ENCODE measurements at regions of chr13 and their contacts with region 1.

Region 1: DNA sequence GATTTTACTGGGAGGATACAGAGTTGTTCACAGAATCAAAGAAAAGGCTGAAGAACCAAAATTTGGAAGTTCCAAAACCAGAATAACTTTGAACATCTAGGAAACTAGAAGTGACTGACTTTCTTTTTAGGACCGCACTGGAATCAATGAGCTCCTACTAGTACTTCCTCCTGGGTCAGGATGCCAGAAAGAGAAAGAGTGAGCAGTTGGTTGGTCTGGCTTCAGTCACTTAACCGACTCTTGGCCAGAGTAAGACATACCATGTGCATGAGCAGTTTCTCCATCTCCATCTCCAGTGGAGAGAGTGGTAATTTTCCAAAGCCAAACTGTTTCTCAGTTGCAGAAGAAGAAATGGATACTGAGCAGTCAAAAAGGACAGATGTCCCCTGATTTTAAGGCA is 27.1 kb upstream of the MTUS2 start:
- DNase-seq: no peak
- ATAC-seq: peak; percentile 33 to 64
- H3K4me3 ChIP-seq: no peak overlapping the region
- H3K27ac ChIP-seq: no peak overlapping the region
- H3K4me1 ChIP-seq: no peaks in the 10 kb centered on the region
- H3K27me3 ChIP-seq: no peaks in the 10 kb centered on the region

Region 2: DNA sequence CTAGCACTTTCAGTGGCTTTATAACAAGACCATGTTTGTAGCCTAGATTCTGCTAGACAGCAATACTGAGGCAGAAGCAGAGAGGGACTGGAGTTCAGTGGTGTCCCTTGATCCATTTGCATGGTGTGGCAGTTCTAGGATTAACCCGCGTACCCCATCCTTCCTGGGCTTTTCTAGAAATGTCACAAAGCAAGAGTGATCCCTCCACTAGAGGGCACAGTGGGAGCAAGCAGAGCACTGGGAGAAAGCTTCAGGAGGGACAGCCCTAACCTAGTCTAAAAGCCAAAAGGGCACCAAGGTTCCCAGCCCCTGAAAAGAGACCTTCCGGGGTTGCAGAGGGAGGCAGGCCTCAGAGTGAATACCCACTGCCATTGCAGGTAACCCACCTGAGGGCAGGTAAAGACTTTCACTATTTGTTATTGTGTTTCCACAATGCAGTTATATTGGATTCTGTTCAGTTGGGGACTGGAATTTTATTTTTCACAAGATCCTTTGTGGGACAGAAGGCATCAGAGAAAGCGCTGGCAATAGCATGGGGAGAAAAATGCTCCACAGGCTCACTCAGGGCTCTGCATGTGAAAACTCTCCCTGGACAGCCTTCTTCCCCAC is 468.7 kb before region 1 on chr13:
- intact Hi-C with region 1: loop called in 2 of 4 experiments (anchors 10 kb)
- DNase-seq: peak in 2 of 3 donors; percentile 47 to 69
- ATAC-seq: peak; percentile 77 to 85
- H3K4me3 ChIP-seq: no peak overlapping the region
- H3K27ac ChIP-seq: peak overlapping the region; percentile 26
- H3K4me1 ChIP-seq: no peaks in the 10 kb centered on the region
- H3K27me3 ChIP-seq: no peaks in the 10 kb centered on the region

Region 3: DNA sequence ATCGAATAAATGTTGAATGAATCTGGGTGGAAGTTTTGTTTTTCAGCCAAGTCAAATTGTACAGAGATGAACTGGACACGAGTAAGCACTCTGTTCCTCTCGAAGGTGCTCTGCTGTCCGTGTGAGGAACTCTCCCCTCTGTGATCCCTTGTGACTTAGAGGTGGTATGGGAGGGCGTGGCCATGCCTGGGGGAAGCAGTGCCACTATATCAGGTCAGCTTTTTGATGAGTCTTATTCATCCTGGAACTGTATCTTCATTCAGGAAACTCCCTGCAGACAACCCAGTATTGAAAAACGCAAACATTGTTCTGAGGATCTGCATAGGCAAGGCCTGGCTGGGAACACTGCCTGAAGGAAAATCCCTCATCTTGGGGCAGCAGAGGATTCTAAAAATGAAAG is 252.4 kb before region 1 on chr13:
- intact Hi-C with region 1: no loop called
- DNase-seq: no peak
- ATAC-seq: peak in 1 of 2 donors; percentile 59
- H3K4me3 ChIP-seq: no peak overlapping the region
- H3K27ac ChIP-seq: no peak overlapping the region
- H3K4me1 ChIP-seq: no peaks in the 10 kb centered on the region
- H3K27me3 ChIP-seq: no peaks in the 10 kb centered on the region

Region 4: DNA sequence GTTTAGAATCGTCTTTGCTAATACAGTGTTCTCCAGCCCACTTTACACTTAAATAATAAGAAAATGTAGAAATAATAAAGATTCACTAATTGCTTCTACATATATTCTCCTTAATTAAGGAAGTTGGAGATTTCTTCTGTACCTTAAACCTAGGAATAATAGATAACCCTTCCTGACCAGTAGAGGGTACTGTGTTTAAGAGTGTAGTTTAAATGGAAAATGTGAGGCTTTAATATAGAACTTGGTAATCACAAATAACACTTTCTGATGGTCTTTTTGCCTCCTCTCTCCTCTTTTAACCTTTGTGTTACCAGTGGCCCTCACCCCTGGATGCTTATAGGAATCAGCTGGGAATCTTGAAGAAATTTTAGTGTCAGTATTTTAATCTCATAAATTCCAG is 113.4 kb before region 1 on chr13:
- intact Hi-C with region 1: loop called in 2 of 4 experiments (anchors 5 kb)
- DNase-seq: no peak
- ATAC-seq: no peak
- H3K4me3 ChIP-seq: no peak overlapping the region
- H3K27ac ChIP-seq: no peak overlapping the region
- H3K4me1 ChIP-seq: no peaks in the 10 kb centered on the region
- H3K27me3 ChIP-seq: no peaks in the 10 kb centered on the region

Region 5: GRCh38 chr13:28854657-28855056 is 61.7 kb after region 1 on chr13:
- intact Hi-C with region 1: no loop called
- DNase-seq: no peak
- ATAC-seq: no peak
- H3K4me3 ChIP-seq: no peak overlapping the region
- H3K27ac ChIP-seq: no peak overlapping the region
- H3K4me1 ChIP-seq: no peaks in the 10 kb centered on the region
- H3K27me3 ChIP-seq: no peaks in the 10 kb centered on the region